CD4-positive, alpha-beta T cell (primary cell): ENCODE measurements at regions of chr9 and their contacts with region 1.

Region 1: GRCh38 chr9:128296337-128297220 is 20.5 kb downstream of the SWI5 start:
- DNase-seq: no peak
- ATAC-seq: no peak
- H3K4me3 ChIP-seq: no peak overlapping the region
- H3K4me3 Mint-ChIP-seq: no peak overlapping the region
- H3K27ac ChIP-seq: no peak overlapping the region
- H3K27ac Mint-ChIP-seq: no peak overlapping the region
- H3K4me1 ChIP-seq: no peaks in the 10 kb centered on the region
- H3K4me1 Mint-ChIP-seq: peaks cover 5% of the 10 kb centered on the region
- H3K27me3 ChIP-seq: no peaks in the 10 kb centered on the region
- H3K27me3 Mint-ChIP-seq: no peaks in the 10 kb centered on the region
- CTCF ChIP-seq: no peak

Region 2: GRCh38 chr9:128339771-128340690 is 43.5 kb after region 1 on chr9 and contains the start of gene SLC27A4:
- CTCF ChIA-PET with region 1: interaction called, 9 read pairs
- POLR2A ChIA-PET with region 1: no interaction called
- intact Hi-C with region 1: loop called (anchors 1 to 2 kb)
- DNase-seq: peak; percentile 61 to 94 (median 76)
- ATAC-seq: peak; percentile 92
- H3K4me3 ChIP-seq: peak within 1 kb of the TSS; percentile 75
- H3K4me3 Mint-ChIP-seq: peak within 1 kb of the TSS; percentile 98
- H3K27ac ChIP-seq: peak within 1 kb of the TSS; percentile 41 to 46
- H3K27ac Mint-ChIP-seq: peak within 1 kb of the TSS; percentile 81
- H3K4me1 ChIP-seq: peaks cover 21% of the 10 kb centered on the region
- H3K4me1 Mint-ChIP-seq: peaks cover 7% of the 10 kb centered on the region
- H3K27me3 ChIP-seq: no peaks in the 10 kb centered on the region
- H3K27me3 Mint-ChIP-seq: no peaks in the 10 kb centered on the region
- CTCF ChIP-seq: no peak
- total RNA-seq, gene SLC27A4: 2.2 to 3.1 TPM

Region 3: DNA sequence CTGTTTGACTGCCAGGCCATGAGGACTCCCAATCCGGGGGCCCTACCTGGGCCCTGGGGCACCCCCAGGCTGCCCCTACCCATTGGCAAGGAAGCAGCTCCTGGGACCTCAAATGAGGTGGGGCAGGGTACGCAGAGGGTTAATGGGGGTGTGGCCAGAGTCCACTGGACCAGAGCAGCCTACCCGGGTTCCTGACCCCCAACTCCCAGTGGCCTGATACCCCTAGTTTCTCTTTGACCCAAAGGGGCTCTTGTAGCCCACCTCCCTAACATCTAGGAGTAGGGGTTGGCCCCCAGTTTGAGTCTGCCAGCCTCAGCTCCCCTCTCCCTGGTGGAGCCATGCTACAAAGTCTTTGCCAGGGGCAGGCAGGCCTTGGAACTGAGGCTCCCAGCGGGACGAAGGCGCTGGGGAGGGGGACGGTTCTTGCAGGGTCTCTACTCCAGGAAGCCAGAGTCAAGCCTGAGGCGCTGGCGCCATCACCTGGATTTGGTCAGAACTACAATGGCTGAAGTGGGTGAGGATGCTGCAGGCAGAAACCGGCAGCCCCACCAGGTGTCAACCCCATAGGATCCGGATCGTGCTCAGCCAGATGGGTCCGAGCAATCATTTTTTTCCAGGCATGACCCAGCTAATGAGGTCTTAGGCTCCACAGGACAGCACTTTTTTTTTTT is 115.7 kb after region 1 on chr9:
- CTCF ChIA-PET with region 1: interaction called, 4 read pairs
- POLR2A ChIA-PET with region 1: no interaction called
- intact Hi-C with region 1: loop called (anchors 1 to 2 kb)
- DNase-seq: peak; percentile 19 to 66 (median 39)
- ATAC-seq: peak; percentile 79
- H3K4me3 ChIP-seq: no peak overlapping the region
- H3K4me3 Mint-ChIP-seq: no peak overlapping the region
- H3K27ac ChIP-seq: no peak overlapping the region
- H3K27ac Mint-ChIP-seq: no peak overlapping the region
- H3K4me1 ChIP-seq: no peaks in the 10 kb centered on the region
- H3K4me1 Mint-ChIP-seq: no peaks in the 10 kb centered on the region
- H3K27me3 ChIP-seq: peaks cover 38 to 53% of the 10 kb centered on the region in 2 experiments
- H3K27me3 Mint-ChIP-seq: peaks cover 66% of the 10 kb centered on the region
- CTCF ChIP-seq: no peak

Region 4: GRCh38 chr9:128428644-128429512 is 132.3 kb after region 1 on chr9:
- CTCF ChIA-PET with region 1: no interaction called
- POLR2A ChIA-PET with region 1: no interaction called
- intact Hi-C with region 1: no loop called
- DNase-seq: no peak
- ATAC-seq: no peak
- H3K4me3 ChIP-seq: no peak overlapping the region
- H3K4me3 Mint-ChIP-seq: no peak overlapping the region
- H3K27ac ChIP-seq: no peak overlapping the region
- H3K27ac Mint-ChIP-seq: no peak overlapping the region
- H3K4me1 ChIP-seq: no peaks in the 10 kb centered on the region
- H3K4me1 Mint-ChIP-seq: no peaks in the 10 kb centered on the region
- H3K27me3 ChIP-seq: no peaks in the 10 kb centered on the region
- H3K27me3 Mint-ChIP-seq: no peaks in the 10 kb centered on the region
- CTCF ChIP-seq: no peak

Region 5: GRCh38 chr9:128677794-128678193 is 381.2 kb after region 1 on chr9:
- CTCF ChIA-PET with region 1: no interaction called
- POLR2A ChIA-PET with region 1: no interaction called
- intact Hi-C with region 1: no loop called
- DNase-seq: no peak
- ATAC-seq: no peak
- H3K4me3 ChIP-seq: no peak overlapping the region
- H3K4me3 Mint-ChIP-seq: no peak overlapping the region
- H3K27ac ChIP-seq: no peak overlapping the region
- H3K27ac Mint-ChIP-seq: no peak overlapping the region
- H3K4me1 ChIP-seq: peaks cover under 1% of the 10 kb centered on the region
- H3K4me1 Mint-ChIP-seq: no peaks in the 10 kb centered on the region
- H3K27me3 ChIP-seq: no peaks in the 10 kb centered on the region
- H3K27me3 Mint-ChIP-seq: no peaks in the 10 kb centered on the region
- CTCF ChIP-seq: no peak

Region 6: GRCh38 chr9:128723866-128724743 is 427.5 kb after region 1 on chr9 and contains the start of gene ZDHHC12:
- CTCF ChIA-PET with region 1: no interaction called
- POLR2A ChIA-PET with region 1: no interaction called
- intact Hi-C with region 1: no loop called
- DNase-seq: peak; percentile 97 to 100 (median 99)
- ATAC-seq: peak; percentile 96
- H3K4me3 ChIP-seq: peak within 1 kb of the TSS; percentile 90
- H3K4me3 Mint-ChIP-seq: peak within 1 kb of the TSS; percentile 95
- H3K27ac ChIP-seq: peak within 1 kb of the TSS; percentile 70 to 72
- H3K27ac Mint-ChIP-seq: peak within 1 kb of the TSS; percentile 86
- H3K4me1 ChIP-seq: peaks cover 53% of the 10 kb centered on the region
- H3K4me1 Mint-ChIP-seq: peaks cover 33% of the 10 kb centered on the region
- H3K27me3 ChIP-seq: no peaks in the 10 kb centered on the region
- H3K27me3 Mint-ChIP-seq: no peaks in the 10 kb centered on the region
- CTCF ChIP-seq: no peak
- total RNA-seq, gene ZDHHC12: 22.0 to 23.7 TPM